SK-N-SH (cell line): ENCODE measurements at regions of chr11 and their contacts with region 1.

Region 1: GRCh38 chr11:14974515-14975251 is 2.5 kb upstream of the CALCA start:
- DNase-seq: peak; percentile 65
- H3K4me3 ChIP-seq: peak overlapping the region; percentile 14 to 33; a peak in 3 of 4 replicates
- H3K27ac ChIP-seq: no peak overlapping the region
- H3K4me1 ChIP-seq: peaks cover 0 to 23% of the 10 kb centered on the region in 2 experiments; a peak in 1 of 4 replicates
- H3K27me3 ChIP-seq: peaks cover 53% of the 10 kb centered on the region
- CTCF ChIP-seq: peak; percentile 63
- EP300 ChIP-seq: no peak
- RAD21 ChIP-seq: peak; percentile 51

Region 2: GRCh38 chr11:14698771-14699170 is 275.9 kb before region 1 on chr11:
- CTCF ChIA-PET with region 1: no interaction called
- POLR2A ChIA-PET with region 1: no interaction called
- DNase-seq: no peak
- H3K4me3 ChIP-seq: no peak overlapping the region
- H3K27ac ChIP-seq: no peak overlapping the region
- H3K4me1 ChIP-seq: no peaks in the 10 kb centered on the region; a peak in 1 of 4 replicates
- H3K27me3 ChIP-seq: no peaks in the 10 kb centered on the region
- CTCF ChIP-seq: no peak
- EP300 ChIP-seq: no peak
- RAD21 ChIP-seq: no peak

Region 3: DNA sequence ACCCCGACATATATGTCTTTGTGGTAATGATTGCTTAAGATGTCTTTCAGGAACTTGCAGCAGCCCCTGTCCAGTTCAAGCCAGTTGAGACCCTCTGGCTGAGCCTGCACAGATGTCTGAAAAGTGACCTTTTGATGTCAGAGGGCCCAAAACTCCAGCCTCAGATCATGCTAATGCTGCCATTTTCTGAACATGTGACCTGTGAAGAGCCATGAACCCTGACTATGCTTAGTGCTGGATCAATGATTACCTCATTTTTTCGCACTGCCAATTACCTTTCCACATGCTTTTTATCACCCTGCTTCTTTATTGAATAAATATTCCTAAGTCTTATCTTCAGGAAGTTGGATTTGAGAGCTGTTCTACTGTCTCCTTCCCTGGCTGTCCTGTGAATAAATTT is 75.8 kb before region 1 on chr11:
- CTCF ChIA-PET with region 1: no interaction called
- POLR2A ChIA-PET with region 1: no interaction called
- DNase-seq: no peak
- H3K4me3 ChIP-seq: no peak overlapping the region
- H3K27ac ChIP-seq: no peak overlapping the region
- H3K4me1 ChIP-seq: no peaks in the 10 kb centered on the region; a peak in 1 of 4 replicates
- H3K27me3 ChIP-seq: no peaks in the 10 kb centered on the region
- CTCF ChIP-seq: no peak
- EP300 ChIP-seq: no peak
- RAD21 ChIP-seq: no peak

Region 4: DNA sequence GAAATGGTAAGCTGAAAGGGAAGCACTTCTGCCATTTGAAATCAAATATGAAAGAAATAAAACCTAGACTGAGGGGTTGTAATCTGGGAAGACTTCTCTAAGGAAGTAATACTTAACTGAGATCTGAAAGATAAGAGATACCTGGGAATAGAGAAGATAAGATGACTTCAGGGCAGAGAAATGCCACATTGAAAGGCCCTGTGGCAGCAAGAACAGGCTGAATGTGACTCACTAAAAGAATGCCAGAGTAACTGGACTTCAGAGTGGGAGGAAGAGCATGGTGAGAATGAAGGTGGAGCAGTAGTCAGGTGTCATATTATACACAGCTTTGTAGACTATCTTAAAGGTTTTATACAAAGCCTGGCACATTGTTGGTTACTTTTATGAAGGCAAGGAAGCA is 20.1 kb before region 1 on chr11:
- CTCF ChIA-PET with region 1: interaction called, 59 read pairs
- POLR2A ChIA-PET with region 1: no interaction called
- DNase-seq: no peak
- H3K4me3 ChIP-seq: no peak overlapping the region
- H3K27ac ChIP-seq: no peak overlapping the region
- H3K4me1 ChIP-seq: no peaks in the 10 kb centered on the region
- H3K27me3 ChIP-seq: no peaks in the 10 kb centered on the region
- CTCF ChIP-seq: no peak
- EP300 ChIP-seq: no peak
- RAD21 ChIP-seq: no peak

Region 5: DNA sequence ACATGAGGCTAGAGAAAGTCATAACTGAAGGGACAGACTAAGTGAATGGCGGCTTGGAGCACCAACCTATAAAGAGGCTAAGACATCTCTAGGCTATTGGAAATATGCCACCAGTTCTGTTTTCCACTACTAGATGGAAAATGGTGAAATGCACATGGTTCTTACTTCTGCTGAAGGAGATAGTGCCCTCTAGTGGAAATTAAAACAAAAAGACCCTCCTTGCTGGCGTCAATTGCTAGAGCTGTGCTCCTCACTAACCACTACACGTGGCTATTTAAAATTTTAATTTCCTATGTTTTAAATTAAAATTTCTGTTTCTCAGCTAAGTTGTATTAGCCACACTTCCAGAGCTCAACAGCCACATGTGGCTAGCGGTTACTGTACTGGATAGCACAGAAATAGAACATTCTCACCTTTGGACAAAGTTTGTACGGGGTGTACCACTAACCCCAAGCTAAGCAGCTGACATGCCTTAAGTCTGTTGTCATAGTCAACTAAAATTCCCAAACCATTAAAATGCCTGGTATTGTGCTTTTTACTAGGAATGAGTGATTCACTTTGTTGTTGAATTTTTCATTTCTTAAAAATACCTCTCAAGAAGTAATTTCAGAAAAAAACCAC is 31.6 kb after region 1 on chr11:
- CTCF ChIA-PET with region 1: interaction called, 28 read pairs
- POLR2A ChIA-PET with region 1: no interaction called
- DNase-seq: peak; percentile 3
- H3K4me3 ChIP-seq: no peak overlapping the region
- H3K27ac ChIP-seq: no peak overlapping the region
- H3K4me1 ChIP-seq: no peaks in the 10 kb centered on the region
- H3K27me3 ChIP-seq: no peaks in the 10 kb centered on the region
- CTCF ChIP-seq: peak; percentile 63
- EP300 ChIP-seq: no peak
- RAD21 ChIP-seq: peak; percentile 47

Region 6: GRCh38 chr11:15011776-15012175 is 37.1 kb after region 1 on chr11:
- CTCF ChIA-PET with region 1: interaction called, 28 read pairs
- POLR2A ChIA-PET with region 1: no interaction called
- DNase-seq: no peak
- H3K4me3 ChIP-seq: no peak overlapping the region
- H3K27ac ChIP-seq: no peak overlapping the region
- H3K4me1 ChIP-seq: no peaks in the 10 kb centered on the region; a peak in 2 of 4 replicates
- H3K27me3 ChIP-seq: no peaks in the 10 kb centered on the region
- CTCF ChIP-seq: no peak
- EP300 ChIP-seq: no peak
- RAD21 ChIP-seq: no peak

Region 7: GRCh38 chr11:15180212-15180792 is 205.6 kb after region 1 on chr11:
- CTCF ChIA-PET with region 1: no interaction called
- POLR2A ChIA-PET with region 1: no interaction called
- DNase-seq: no peak
- H3K4me3 ChIP-seq: no peak overlapping the region
- H3K27ac ChIP-seq: no peak overlapping the region
- H3K4me1 ChIP-seq: peaks cover 0 to 7% of the 10 kb centered on the region in 2 experiments; a peak in 2 of 4 replicates
- H3K27me3 ChIP-seq: no peaks in the 10 kb centered on the region
- CTCF ChIP-seq: no peak
- EP300 ChIP-seq: no peak
- RAD21 ChIP-seq: no peak

Region 8: DNA sequence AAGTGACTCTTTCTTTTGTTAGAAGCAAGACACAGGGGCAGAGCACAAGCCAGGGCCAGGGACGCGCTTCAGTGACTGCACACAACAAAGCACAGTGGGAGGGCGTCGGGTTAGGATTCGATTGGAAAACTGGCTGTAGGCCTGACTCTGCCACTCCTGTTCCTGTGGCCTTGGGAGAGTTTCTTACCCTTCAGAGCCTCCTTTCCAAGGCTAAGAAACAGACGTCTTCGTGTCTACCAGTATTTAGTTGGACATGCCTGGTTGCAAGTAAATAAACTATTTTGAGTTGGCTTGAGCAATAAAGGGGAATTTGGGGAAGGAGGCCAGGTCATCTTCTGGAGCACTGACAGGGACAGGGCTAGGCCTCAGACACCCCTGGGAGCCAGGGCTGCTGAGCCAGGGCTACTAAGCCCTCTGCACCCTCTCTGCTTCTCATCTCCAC is 689.1 kb after region 1 on chr11:
- CTCF ChIA-PET with region 1: no interaction called
- POLR2A ChIA-PET with region 1: no interaction called
- DNase-seq: no peak
- H3K4me3 ChIP-seq: no peak overlapping the region
- H3K27ac ChIP-seq: no peak overlapping the region
- H3K4me1 ChIP-seq: no peaks in the 10 kb centered on the region; a peak in 1 of 4 replicates
- H3K27me3 ChIP-seq: no peaks in the 10 kb centered on the region
- CTCF ChIP-seq: no peak
- EP300 ChIP-seq: no peak
- RAD21 ChIP-seq: no peak